Mammary epithelial cell (primary cell): ENCODE measurements at regions of chr19 and their contacts with region 1.

Region 1: DNA sequence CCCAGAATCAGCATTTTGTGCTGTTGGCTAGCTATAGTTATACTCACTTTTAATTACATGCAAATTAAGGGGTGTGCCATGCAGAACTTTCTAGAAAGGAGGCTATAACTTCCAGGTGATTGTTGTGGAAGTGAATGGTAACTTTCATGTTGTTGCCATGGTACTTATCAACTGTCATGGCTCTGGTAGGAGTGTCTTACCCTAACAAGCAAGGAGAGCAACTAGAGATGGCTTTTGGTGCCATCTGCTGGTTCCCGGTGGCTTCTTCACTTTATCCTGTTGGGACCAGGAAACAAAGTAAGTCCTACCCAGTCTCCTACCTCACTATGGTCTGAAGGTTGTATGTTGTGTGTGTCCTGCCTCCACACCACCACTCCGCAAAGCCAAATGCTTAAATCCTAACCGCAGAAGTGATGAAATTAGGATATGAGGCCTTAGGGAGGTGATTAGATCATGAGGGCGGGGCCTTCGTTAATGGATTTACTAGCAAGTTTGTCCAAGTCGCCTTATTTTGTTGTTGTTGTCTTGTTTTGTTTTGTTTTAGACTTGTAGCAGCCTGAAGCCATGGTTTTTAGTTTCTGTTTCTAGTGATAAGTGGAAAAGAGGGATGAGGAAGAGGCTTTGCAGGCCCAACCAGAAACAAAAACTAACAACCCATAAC is 22.6 kb downstream of the FBXL12 start:
- DNase-seq: peak; percentile 86
- H3K4me3 ChIP-seq: no peak overlapping the region
- H3K27ac ChIP-seq: peak overlapping the region; percentile 49
- H3K4me1 ChIP-seq: peaks cover 12% of the 10 kb centered on the region
- H3K27me3 ChIP-seq: no peaks in the 10 kb centered on the region
- CTCF ChIP-seq: peak; percentile 78 to 89

Region 2: DNA sequence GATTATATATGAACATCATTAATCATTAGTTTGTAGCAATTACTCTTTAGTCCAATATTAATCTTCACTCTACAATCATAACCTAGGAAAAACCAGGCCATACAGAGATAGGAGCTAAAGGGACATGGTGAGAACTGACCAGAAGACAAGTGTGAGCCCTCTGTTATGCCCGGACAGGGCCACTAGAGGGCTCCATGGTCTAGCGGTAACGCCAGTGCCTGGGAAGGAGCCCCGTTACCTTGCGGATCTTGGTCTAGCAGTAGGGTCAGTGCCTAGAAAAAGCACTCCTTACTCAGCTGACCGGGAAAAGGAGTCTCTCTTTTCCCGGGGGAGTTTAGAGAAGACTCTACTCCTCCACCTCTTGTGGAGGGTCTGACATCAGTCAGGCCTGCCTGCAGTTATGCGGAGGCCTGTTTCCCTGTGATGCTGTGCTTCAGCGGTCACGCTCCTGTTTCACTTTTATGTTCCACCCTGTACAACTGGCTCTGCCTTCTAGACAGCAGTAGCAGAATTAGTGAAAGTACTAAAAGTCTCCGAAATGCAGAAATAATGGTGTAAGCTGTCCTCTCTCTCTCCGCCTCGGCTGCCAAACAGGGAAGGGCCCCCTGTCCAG is 590.6 kb before region 1 on chr19:
- CTCF ChIA-PET with region 1: interaction called, 23 read pairs
- dilution Hi-C with region 1: no loop called
- in situ Hi-C with region 1: no loop called
- intact Hi-C with region 1: loop called (anchors 1 kb)
- DNase-seq: peak; percentile 53
- H3K4me3 ChIP-seq: peak overlapping the region; percentile 21 to 33 (median 27)
- H3K27ac ChIP-seq: no peak overlapping the region
- H3K4me1 ChIP-seq: no peaks in the 10 kb centered on the region
- H3K27me3 ChIP-seq: no peaks in the 10 kb centered on the region
- CTCF ChIP-seq: peak; percentile 71 to 89

Region 3: GRCh38 chr19:9435279-9436268 is 360.7 kb before region 1 on chr19 and contains the start of gene ZNF266:
- CTCF ChIA-PET with region 1: no interaction called
- dilution Hi-C with region 1: no loop called
- in situ Hi-C with region 1: no loop called
- intact Hi-C with region 1: loop called (anchors 10 kb)
- DNase-seq: peak; percentile 87
- H3K4me3 ChIP-seq: peak within 1 kb of the TSS; percentile 70 to 95 (median 84)
- H3K27ac ChIP-seq: peak within 1 kb of the TSS; percentile 78
- H3K4me1 ChIP-seq: no peaks in the 10 kb centered on the region
- H3K27me3 ChIP-seq: no peaks in the 10 kb centered on the region
- CTCF ChIP-seq: peak; percentile 53 to 74
- total RNA-seq, gene ZNF266: 10.5 to 14.2 TPM

Region 4: GRCh38 chr19:9674663-9675357 is 121.4 kb before region 1 on chr19 and contains the start of gene ZNF562:
- CTCF ChIA-PET with region 1: no interaction called
- dilution Hi-C with region 1: no loop called
- in situ Hi-C with region 1: no loop called
- intact Hi-C with region 1: loop called (anchors 2 kb)
- DNase-seq: peak; percentile 89
- H3K4me3 ChIP-seq: peak within 1 kb of the TSS; percentile 68 to 98 (median 77)
- H3K27ac ChIP-seq: peak within 1 kb of the TSS; percentile 95
- H3K4me1 ChIP-seq: no peaks in the 10 kb centered on the region
- H3K27me3 ChIP-seq: no peaks in the 10 kb centered on the region
- CTCF ChIP-seq: no peak
- total RNA-seq, gene ZNF562: 42.8 to 42.9 TPM

Region 5: GRCh38 chr19:9727644-9728043 is 68.6 kb before region 1 on chr19:
- CTCF ChIA-PET with region 1: no interaction called
- dilution Hi-C with region 1: no loop called
- in situ Hi-C with region 1: no loop called
- intact Hi-C with region 1: no loop called
- DNase-seq: no peak
- H3K4me3 ChIP-seq: no peak overlapping the region
- H3K27ac ChIP-seq: no peak overlapping the region
- H3K4me1 ChIP-seq: no peaks in the 10 kb centered on the region
- H3K27me3 ChIP-seq: no peaks in the 10 kb centered on the region
- CTCF ChIP-seq: no peak

Region 6: DNA sequence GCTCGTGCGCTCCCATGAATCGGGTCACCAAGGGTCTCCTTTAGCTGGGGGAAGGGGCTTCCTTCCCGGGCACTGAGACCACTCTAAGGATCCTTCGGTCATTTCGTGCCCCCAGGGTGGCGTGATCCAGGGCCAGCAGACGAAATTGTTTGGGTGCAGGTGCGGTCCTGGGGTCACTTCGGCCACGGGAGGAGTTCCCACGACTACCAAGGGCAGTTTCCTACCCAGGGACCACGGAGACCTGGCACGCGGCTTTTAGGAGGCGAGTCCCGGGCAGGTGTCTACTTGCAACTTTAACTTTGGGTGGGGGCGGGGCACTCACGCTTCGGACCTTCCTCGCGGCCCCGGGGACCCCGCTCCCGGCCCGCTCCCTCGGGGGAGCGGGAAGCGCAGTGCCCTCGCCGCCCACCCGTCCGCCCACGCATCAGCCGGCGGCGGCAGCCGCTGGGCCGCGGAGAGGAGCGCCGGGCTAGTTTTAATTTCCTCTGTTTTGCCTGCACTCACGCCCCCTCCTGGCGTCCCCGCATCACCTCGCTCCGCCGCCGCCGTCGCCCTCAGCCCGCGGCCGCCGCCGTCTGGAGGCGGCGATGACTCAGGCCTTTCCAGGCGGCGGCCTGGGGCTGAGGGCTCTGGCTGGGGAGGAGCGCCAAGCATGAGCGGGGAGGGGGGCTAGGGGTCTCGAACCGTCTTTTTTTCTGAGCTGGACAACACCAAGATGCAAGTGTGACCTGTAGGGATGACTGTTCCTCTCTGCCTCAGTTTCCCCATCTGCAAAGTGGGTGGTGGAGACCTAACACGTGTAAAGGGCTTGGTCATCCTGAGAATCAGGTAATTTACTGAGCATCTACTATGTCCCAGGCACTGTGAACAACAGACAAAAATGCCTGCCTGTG is 118.3 kb after region 1 on chr19:
- CTCF ChIA-PET with region 1: no interaction called
- dilution Hi-C with region 1: no loop called
- in situ Hi-C with region 1: no loop called
- intact Hi-C with region 1: loop called (anchors 1 kb)
- DNase-seq: peak; percentile 77
- H3K4me3 ChIP-seq: peak overlapping the region; percentile 45 to 53 (median 46)
- H3K27ac ChIP-seq: no peak overlapping the region
- H3K4me1 ChIP-seq: peaks cover 6% of the 10 kb centered on the region
- H3K27me3 ChIP-seq: peaks cover 8% of the 10 kb centered on the region
- CTCF ChIP-seq: peak; percentile 12 to 62